ACHN (cell line): ENCODE measurements at regions of chr1 and their contacts with region 1.

Region 1: DNA sequence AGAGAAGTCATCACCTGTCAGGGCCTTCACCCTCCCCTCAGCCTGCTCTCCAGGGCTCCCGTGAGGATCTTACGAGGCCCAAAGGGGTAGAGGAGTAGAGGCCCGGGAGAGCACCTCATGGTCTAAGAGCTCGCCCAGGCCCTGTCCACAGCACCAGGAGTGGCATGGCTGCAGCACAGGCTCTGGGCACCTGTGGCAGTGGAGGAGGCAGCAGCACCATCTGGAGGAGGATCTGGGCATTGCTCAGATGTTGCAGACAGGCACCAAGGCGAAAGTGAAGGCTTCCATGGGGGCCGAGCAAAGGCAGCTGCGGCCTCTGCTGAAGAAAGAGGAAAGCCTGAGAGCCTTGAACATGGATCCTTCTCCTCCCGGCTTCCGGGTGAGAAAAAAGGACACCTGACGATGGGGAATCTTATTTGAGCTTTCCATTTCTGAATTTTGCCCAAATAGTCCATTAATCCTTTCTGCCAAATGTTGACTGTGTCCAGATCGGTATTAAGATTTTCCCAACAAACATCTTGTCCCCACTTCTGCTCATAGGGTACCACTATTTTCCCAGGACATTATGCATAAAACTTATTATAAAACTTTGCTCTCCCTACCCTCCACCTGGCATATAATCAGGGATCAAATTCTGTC is 604.7 kb downstream of the PTPRC start:
- DNase-seq: peak; percentile 75

Region 2: GRCh38 chr1:198771563-198772153 is 471.9 kb before region 1 on chr1:
- in situ Hi-C with region 1: loop called (anchors 25 kb)
- DNase-seq: peak; percentile 66

Region 3: DNA sequence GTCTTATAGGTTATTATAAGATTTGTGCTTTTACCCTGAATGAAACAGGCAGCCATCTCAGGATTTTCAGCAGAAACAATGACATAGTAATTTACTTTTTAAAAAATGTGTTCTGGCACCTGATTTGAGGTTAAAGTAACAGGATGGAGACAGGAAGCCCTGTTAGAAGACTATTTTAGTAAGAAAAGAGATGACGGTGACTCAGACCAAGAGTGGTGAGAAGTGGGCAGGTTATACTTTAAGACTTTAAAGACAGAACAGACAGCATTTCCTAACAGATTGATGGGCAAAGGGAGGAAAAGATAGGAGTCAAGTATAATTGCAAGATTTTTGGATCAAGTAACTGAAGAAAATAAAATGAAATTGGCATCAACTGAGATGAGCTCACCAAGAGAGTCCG is 347.2 kb after region 1 on chr1:
- in situ Hi-C with region 1: no loop called
- DNase-seq: no peak

Region 4: DNA sequence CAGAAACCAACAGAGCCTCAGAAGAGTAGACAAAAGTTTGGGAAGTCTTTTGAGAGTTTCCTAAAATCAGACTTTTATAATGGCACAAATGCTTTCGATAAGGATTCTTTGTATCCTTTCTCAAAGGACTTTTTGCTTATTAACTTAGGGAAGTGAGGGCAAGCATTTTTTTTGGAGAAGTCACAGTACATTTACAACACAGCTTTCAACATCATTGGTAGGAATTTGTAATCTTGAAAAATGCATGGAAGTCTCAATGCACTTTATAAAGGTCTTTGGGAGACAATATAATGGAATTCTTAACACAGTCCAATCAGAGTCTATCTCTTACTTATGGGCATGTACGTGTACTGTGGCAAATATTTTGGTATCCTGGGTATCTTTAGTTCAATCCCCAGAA is 458.2 kb after region 1 on chr1:
- in situ Hi-C with region 1: no loop called
- DNase-seq: no peak